Heart left ventricle (tissue), 16 donors: ENCODE measurements at regions of chr19 and their contacts with region 1.

Region 1: GRCh38 chr19:49877020-49877878 is at the starts of genes AKT1S1 and TBC1D17:
- DNase-seq: peak; percentile 99 to 100 (median 99)
- ATAC-seq: peak; percentile 84 to 90 (median 87)
- H3K4me3 ChIP-seq: peak within 1 kb of the TSS; percentile 72 to 99 (median 87)
- H3K27ac ChIP-seq: peak within 1 kb of the TSS; percentile 96 to 100 (median 98)
- H3K4me1 ChIP-seq: peaks cover 0 to 30% (median 19%) of the 10 kb centered on the region in 12 donors
- H3K27me3 ChIP-seq: no peaks in the 10 kb centered on the region
- CTCF ChIP-seq: no peak
- POLR2A ChIP-seq: peak; percentile 58 to 70
- total RNA-seq, gene AKT1S1: 25.3 to 46.0 (median 31.2) TPM
- total RNA-seq, gene TBC1D17: 30.1 to 54.8 (median 39.8) TPM

Region 2: DNA sequence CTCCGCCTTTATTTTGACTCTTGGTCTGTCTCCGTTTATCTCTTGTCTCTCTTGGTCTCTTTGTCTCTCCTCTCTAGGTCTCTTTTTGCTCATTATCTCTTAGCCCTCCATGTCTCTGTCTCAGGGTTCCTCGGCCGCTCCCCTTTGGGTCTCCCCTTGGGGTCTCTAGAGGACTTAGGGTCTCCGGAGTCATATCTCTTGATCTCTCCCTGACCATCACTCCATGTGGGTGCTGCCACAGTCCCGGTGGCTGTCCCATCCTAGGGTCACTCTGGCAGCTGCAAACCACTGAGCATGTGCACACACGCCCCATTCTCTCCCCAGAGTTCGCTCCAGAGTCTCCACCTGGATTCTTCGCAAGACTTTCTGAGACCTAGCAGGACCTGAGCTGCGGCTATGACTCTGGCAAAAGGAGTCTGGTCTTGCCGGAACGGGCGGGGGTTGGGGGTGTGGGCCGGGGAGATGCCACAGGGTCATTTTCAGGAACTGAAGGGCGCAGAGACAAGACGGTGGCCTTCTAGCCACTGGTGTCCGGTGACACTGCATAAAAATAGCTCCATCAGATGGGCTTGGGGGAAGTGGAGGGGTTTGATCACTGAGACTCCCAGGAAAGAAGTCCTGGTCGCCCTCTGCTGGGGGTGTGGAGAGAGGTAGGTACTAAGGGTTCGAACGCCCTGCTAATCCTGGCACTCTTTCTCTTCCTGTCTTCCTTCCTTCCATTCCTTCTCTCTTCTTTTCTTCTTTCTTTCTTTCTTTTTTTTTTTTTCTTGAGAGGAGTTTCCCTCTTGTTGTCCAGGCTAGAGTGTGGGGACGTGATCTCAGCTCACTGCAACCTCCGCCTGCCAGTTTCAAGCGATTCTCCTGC is 803.5 kb before region 1 on chr19:
- intact Hi-C with region 1: no loop called
- DNase-seq: no peak
- ATAC-seq: peak in 3 of 4 donors; percentile 50 to 77 (median 60)
- H3K4me3 ChIP-seq: no peak overlapping the region
- H3K27ac ChIP-seq: no peak overlapping the region
- H3K4me1 ChIP-seq: peaks cover 0 to 20% (median 1%) of the 10 kb centered on the region in 12 donors
- H3K27me3 ChIP-seq: peaks cover 9 to 59% (median 24%) of the 10 kb centered on the region in 9 donors
- CTCF ChIP-seq: peak in 2 of 12 donors; percentile 9 to 14
- POLR2A ChIP-seq: no peak

Region 3: DNA sequence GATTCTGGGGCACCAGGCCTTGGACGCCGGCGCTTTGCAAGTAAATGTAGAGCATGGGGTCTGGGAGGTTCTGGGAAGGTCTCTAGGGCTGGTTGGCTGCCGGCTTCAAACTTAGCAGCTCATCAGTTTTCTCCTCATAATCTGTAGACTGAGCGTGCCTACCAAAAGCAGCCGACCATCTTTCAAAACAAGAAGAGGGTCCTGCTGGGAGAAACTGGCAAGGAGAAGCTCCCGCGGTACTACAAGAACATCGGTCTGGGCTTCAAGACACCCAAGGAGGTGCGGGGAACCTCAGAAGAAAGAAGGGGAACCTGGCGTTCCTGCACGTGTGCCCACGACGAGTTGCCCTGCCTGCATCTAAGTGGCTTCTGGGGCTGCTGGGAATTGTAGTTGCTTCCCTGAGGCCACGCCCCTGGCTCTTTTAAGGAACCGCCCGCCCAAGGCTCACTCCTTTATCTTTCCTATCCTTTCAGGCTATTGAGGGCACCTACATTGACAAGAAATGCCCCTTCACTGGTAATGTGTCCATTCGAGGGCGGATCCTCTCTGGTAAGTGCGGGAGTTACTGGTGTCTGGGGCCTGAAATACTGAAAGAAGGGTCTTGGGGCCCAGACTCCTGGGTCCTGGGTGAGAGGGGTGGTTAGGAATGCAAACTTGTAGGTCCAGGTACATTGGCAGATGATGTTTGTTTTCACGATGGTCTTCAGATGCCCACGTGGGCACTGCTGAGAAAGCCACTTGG is 380.0 kb before region 1 on chr19:
- intact Hi-C with region 1: loop called in 1 of 10 experiments (anchors 5 kb)
- DNase-seq: peak in 4 of 5 donors; percentile 63 to 76 (median 67)
- ATAC-seq: no peak
- H3K4me3 ChIP-seq: peak overlapping the region; percentile 80 to 98 (median 90)
- H3K27ac ChIP-seq: peak overlapping the region in 11 of 12 donors; percentile 89 to 99 (median 96)
- H3K4me1 ChIP-seq: peaks cover 14 to 56% (median 41%) of the 10 kb centered on the region in 12 donors
- H3K27me3 ChIP-seq: no peaks in the 10 kb centered on the region
- CTCF ChIP-seq: no peak
- POLR2A ChIP-seq: no peak

Region 4: DNA sequence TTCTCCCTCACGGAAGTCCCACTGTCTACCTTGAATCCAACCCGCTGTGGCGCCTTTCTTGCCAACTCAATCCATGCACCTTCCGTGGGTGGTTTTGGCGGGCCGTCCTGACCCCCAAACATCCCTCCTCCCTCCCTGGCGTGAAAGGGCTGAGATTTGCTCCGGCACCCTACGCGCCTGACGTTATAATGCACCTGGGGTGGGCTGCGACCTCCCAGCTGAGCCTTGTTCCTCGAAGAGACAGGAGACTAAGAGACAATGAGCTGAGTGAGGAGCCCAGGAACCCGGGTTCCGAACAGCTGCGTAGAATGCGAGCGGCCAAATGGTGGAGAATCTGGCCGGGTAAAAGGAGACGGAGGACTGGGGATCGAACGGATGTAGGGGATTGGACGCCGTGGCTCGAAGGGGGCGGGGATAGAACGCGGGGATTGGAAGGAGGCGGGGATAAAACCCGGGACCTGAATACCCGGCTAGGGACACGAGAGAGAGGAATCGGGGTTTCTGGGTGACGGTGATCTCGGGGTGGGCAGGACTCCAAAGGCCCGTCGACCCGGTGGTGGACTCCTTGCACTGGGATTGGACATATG is 186.5 kb before region 1 on chr19 and contains the start of gene CPT1C:
- intact Hi-C with region 1: loop called in 1 of 10 experiments (anchors 5 kb)
- DNase-seq: peak; percentile 80 to 86 (median 83)
- ATAC-seq: peak; percentile 54 to 85 (median 75)
- H3K4me3 ChIP-seq: peak within 1 kb of the TSS; percentile 25 to 71 (median 58)
- H3K27ac ChIP-seq: peak within 1 kb of the TSS; percentile 20 to 85 (median 64)
- H3K4me1 ChIP-seq: peaks cover 0 to 50% (median 30%) of the 10 kb centered on the region in 12 donors
- H3K27me3 ChIP-seq: peaks cover 0 to 27% (median 0%) of the 10 kb centered on the region in 9 donors
- CTCF ChIP-seq: no peak
- POLR2A ChIP-seq: peak in 1 of 2 donors; percentile 43
- total RNA-seq, gene CPT1C: 1.00 to 6.0 (median 2.2) TPM

Region 5: DNA sequence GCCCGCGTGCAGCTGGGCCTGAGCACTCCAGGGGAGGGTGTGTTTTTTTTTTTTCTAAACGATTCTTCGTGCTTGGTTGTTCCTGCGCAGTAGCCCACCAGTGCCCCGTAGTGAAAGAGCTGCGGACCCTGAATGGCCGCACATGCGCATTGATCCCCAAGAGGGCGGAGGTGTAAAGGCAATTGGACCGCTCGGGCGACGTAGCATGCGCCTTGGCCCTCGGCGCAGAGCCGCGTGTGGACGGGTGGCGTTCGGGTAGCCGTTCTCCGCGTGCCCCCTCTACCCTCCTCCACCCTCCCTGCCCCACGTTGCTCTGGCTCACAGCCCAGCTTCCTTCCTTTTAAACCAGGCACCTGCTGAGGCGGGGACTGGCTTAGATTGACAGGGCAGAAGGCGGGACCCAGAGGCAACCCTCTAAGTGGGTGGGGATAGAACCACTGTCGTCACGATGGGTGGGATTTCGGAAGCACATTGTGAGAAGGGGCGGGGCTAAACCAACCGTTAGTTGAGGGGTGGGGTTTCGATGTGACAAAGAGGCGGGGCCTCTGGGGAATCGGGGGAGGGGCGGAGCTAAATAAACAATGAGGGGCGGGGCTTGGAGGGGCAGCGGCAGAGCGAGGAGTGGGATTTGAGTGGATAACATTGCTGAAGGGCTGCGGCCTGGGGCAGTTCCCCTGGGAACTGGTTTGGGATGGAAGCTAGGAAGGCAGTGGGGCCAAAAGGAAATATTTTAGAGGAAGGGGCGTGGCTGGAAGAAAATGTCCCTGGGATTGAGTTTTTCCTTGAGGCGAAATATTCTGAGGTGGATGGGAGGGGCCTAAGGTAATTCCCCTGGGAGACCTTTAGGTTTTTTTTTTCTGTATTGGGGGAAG is 52.6 kb after region 1 on chr19:
- intact Hi-C with region 1: loop called in 1 of 10 experiments (anchors 5 kb)
- DNase-seq: peak; percentile 94 to 97 (median 95)
- ATAC-seq: peak; percentile 91 to 96 (median 92)
- H3K4me3 ChIP-seq: peak overlapping the region; percentile 54 to 99 (median 87)
- H3K27ac ChIP-seq: peak overlapping the region; percentile 87 to 98 (median 94)
- H3K4me1 ChIP-seq: peaks cover 0 to 38% (median 23%) of the 10 kb centered on the region in 12 donors
- H3K27me3 ChIP-seq: no peaks in the 10 kb centered on the region
- CTCF ChIP-seq: peak in 3 of 12 donors; percentile 5 to 15 (median 5)
- POLR2A ChIP-seq: no peak

Region 6: GRCh38 chr19:50020481-50020880 is 143.2 kb after region 1 on chr19:
- intact Hi-C with region 1: no loop called
- DNase-seq: no peak
- ATAC-seq: no peak
- H3K4me3 ChIP-seq: no peak overlapping the region
- H3K27ac ChIP-seq: no peak overlapping the region
- H3K4me1 ChIP-seq: peaks cover 0 to 20% (median 12%) of the 10 kb centered on the region in 12 donors
- H3K27me3 ChIP-seq: no peaks in the 10 kb centered on the region
- CTCF ChIP-seq: no peak
- POLR2A ChIP-seq: no peak